ENCODE measurements at regions of chr9 and their contacts with region 1.

Region 1: GRCh38 chr9:18499980-18500379 is 26.0 kb downstream of the ADAMTSL1 start:
- DNase-seq: no peak
- H3K4me3 ChIP-seq: no peak overlapping the region
- H3K27ac ChIP-seq: no peak overlapping the region
- H3K4me1 ChIP-seq: peaks cover 0 to 9% of the 10 kb centered on the region in 2 donors
- H3K27me3 ChIP-seq: no peaks in the 10 kb centered on the region
- CTCF ChIP-seq: no peak

Region 2: DNA sequence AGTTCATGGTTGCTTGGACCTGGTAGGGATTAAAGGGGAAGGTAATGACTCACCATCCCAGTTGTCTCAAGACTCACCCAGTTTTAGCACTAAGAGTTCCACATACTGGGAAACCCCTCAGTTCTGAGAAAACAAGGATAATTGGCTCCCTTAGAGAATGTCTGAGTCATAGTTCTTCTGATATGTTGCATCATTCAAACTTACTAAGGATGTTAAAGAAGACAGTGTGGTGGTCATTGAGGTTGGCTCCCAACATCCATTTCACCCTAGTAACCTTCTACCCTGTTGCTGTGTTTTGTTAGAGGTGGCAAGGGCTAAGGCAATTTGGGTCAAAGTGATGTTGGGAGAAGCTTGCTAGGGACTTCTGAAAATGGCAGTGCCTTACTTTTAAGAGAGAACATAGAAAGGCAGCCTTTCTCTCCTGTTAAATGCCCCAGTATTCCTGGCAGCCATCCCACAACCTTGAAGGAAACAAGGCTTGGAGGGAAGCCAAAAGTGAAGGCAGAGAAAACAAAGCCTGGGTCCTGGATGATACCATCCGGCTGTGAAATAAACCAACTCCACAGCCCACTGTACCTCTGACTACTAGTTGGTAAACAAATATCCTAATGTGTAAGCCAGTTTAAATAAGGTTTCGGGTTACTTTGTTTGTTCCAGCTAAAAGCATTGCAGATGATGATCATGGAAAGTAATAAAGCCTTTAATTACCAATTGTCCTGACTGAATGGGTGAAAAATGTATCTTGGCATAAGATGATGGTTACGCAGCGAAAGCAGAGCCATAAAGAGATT is 106.4 kb before region 1 on chr9:
- intact Hi-C with region 1: no loop called
- DNase-seq: no peak
- H3K4me3 ChIP-seq: peak overlapping the region in 1 of 2 donors; percentile 2
- H3K27ac ChIP-seq: peak overlapping the region; percentile 62 to 69
- H3K4me1 ChIP-seq: peaks cover 3 to 21% of the 10 kb centered on the region in 2 donors
- H3K27me3 ChIP-seq: no peaks in the 10 kb centered on the region
- CTCF ChIP-seq: no peak

Region 3: GRCh38 chr9:18543406-18544192 is 43.6 kb after region 1 on chr9:
- intact Hi-C with region 1: loop called (anchors 5 kb)
- DNase-seq: no peak
- H3K4me3 ChIP-seq: no peak overlapping the region
- H3K27ac ChIP-seq: peak overlapping the region; percentile 63 to 68
- H3K4me1 ChIP-seq: peaks cover 0 to 10% of the 10 kb centered on the region in 2 donors
- H3K27me3 ChIP-seq: no peaks in the 10 kb centered on the region
- CTCF ChIP-seq: no peak

Measured in ascending aorta (tissue), 2 donors.